ENCODE measurements at regions of chr16 and their contacts with region 1.

Region 1: DNA sequence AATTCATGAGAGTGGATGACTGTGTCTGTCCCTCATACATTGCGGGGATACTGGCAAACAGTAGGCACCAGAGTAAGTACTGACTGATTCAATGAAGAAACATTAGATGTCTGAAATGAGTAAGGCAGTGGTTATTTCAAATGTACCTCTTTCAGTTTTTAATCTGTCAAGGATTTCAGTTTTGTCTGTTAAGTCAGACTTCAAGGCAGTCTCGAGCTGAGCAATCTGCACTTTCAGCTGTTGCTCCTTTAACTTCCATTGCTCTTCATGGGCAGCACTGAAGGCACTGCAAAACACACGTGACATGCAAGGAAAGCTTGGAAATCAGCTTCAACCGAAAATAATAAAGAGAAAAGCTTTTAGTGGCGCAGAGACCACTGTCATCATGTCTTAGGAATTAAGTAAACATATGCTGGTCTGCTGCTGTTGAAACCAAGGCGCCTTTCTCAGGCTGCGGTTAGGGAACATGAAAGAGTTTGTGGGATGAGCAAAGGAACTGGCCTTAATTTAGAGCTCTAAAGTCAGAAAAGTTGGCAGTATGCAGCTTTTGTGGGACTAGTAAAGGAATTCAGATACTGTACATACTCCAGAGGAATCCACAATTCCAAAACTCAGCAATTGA is 38.8 kb downstream of the RPGRIP1L start:
- DNase-seq: no peak
- H3K4me3 Mint-ChIP-seq: no peak overlapping the region
- H3K27ac Mint-ChIP-seq: no peak overlapping the region
- H3K4me1 Mint-ChIP-seq: peaks cover 22% of the 10 kb centered on the region
- H3K27me3 Mint-ChIP-seq: no peaks in the 10 kb centered on the region

Region 2: GRCh38 chr16:53743149-53743566 is 78.3 kb after region 1 on chr16:
- intact Hi-C with region 1: loop called (anchors 1 kb)
- DNase-seq: no peak
- H3K4me3 Mint-ChIP-seq: no peak overlapping the region
- H3K27ac Mint-ChIP-seq: no peak overlapping the region
- H3K4me1 Mint-ChIP-seq: peaks cover 23% of the 10 kb centered on the region
- H3K27me3 Mint-ChIP-seq: no peaks in the 10 kb centered on the region

Region 3: GRCh38 chr16:53872248-53873221 is 207.7 kb after region 1 on chr16:
- intact Hi-C with region 1: loop called (anchors 1 kb)
- DNase-seq: no peak
- H3K4me3 Mint-ChIP-seq: peak overlapping the region; percentile 11
- H3K27ac Mint-ChIP-seq: peak overlapping the region; percentile 82
- H3K4me1 Mint-ChIP-seq: peaks cover 26% of the 10 kb centered on the region
- H3K27me3 Mint-ChIP-seq: no peaks in the 10 kb centered on the region

Measured in activated T-helper 2 cell treated with anti-CD3 and anti-CD28 coated beads, Interferon-gamma antibody, Interleukin-2, Interleukin-4, amounts not matched to agents 10 μg/mL and 5 μg/mL and 100 μg/mL, durations not matched to agents 14 hours and 24 hours and 36 hours (primary cell).